Activated CD4-positive, alpha-beta T cell treated with anti-CD3 and anti-CD28 coated beads for 36 hours (primary cell): ENCODE measurements at regions of chr17 and their contacts with region 1.

Region 1: GRCh38 chr17:75784473-75785015 is at the start of gene UNK:
- DNase-seq: peak; percentile 97
- ATAC-seq: peak; percentile 67
- H3K4me3 Mint-ChIP-seq: peak within 1 kb of the TSS; percentile 91
- H3K27ac Mint-ChIP-seq: peak within 1 kb of the TSS; percentile 100
- H3K4me1 Mint-ChIP-seq: peaks cover 55% of the 10 kb centered on the region
- H3K27me3 Mint-ChIP-seq: peaks cover 1% of the 10 kb centered on the region
- total RNA-seq, gene UNK: 24.5 to 33.7 TPM

Region 2: DNA sequence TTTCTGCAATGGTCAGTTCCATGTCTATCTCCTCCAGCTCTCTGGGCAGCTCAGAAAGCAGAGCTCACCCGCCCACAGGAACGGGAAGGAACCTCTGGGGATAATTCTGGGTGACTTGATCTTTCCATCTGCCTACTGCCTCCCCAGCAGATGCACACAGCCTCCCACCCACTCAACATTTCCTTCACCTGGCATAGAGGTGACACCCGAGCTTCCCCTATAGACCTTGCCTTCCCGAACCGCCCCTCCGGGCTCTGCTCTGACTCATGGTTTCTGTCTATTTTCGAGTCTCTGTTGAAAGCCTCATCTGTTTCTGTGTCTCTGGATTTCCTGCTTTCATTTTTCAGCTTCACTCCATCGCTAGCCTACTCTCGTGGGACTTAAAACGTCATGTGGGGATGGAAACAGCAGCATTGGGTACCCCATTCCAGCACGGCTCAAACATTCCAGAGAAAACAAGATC is 534.5 kb before region 1 on chr17:
- CTCF ChIA-PET with region 1: no interaction called
- POLR2A ChIA-PET with region 1: no interaction called
- intact Hi-C with region 1: no loop called
- DNase-seq: peak; percentile 90
- ATAC-seq: peak; percentile 97
- H3K4me3 Mint-ChIP-seq: peak overlapping the region; percentile 64
- H3K27ac Mint-ChIP-seq: peak overlapping the region; percentile 97
- H3K4me1 Mint-ChIP-seq: peaks cover 74% of the 10 kb centered on the region
- H3K27me3 Mint-ChIP-seq: no peaks in the 10 kb centered on the region

Region 3: GRCh38 chr17:75667021-75667790 is 117.3 kb before region 1 on chr17 and contains the starts of genes RECQL5 and SAP30BP:
- CTCF ChIA-PET with region 1: interaction called, 6 read pairs
- POLR2A ChIA-PET with region 1: interaction called, 3 read pairs
- intact Hi-C with region 1: loop called in 1 of 2 experiments (anchors 1 kb)
- DNase-seq: peak; percentile 99
- ATAC-seq: peak; percentile 100
- H3K4me3 Mint-ChIP-seq: no peak within 1 kb of the TSS
- H3K27ac Mint-ChIP-seq: no peak within 1 kb of the TSS
- H3K4me1 Mint-ChIP-seq: peaks cover 34% of the 10 kb centered on the region
- H3K27me3 Mint-ChIP-seq: no peaks in the 10 kb centered on the region
- total RNA-seq, gene RECQL5: 36.4 to 40.5 TPM
- total RNA-seq, gene SAP30BP: 87.8 to 100.0 TPM

Region 4: GRCh38 chr17:75827252-75828115 is 42.9 kb after region 1 on chr17:
- CTCF ChIA-PET with region 1: interaction called, 15 read pairs
- POLR2A ChIA-PET with region 1: interaction called, 5 read pairs
- intact Hi-C with region 1: loop called (anchors 2 to 5 kb)
- DNase-seq: peak; percentile 85
- ATAC-seq: peak; percentile 75
- H3K4me3 Mint-ChIP-seq: peak overlapping the region; percentile 53
- H3K27ac Mint-ChIP-seq: peak overlapping the region; percentile 87
- H3K4me1 Mint-ChIP-seq: peaks cover 14% of the 10 kb centered on the region
- H3K27me3 Mint-ChIP-seq: no peaks in the 10 kb centered on the region

Region 5: GRCh38 chr17:75896415-75897159 is 112.0 kb after region 1 on chr17 and contains the start of gene TRIM65:
- CTCF ChIA-PET with region 1: interaction called, 4 read pairs
- POLR2A ChIA-PET with region 1: no interaction called
- intact Hi-C with region 1: loop called in 1 of 2 experiments (anchors 2 kb)
- DNase-seq: peak; percentile 86
- ATAC-seq: peak; percentile 85
- H3K4me3 Mint-ChIP-seq: peak within 1 kb of the TSS; percentile 84
- H3K27ac Mint-ChIP-seq: peak within 1 kb of the TSS; percentile 72
- H3K4me1 Mint-ChIP-seq: peaks cover 19% of the 10 kb centered on the region
- H3K27me3 Mint-ChIP-seq: no peaks in the 10 kb centered on the region
- total RNA-seq, gene TRIM65: 28.9 to 31.9 TPM

Region 6: DNA sequence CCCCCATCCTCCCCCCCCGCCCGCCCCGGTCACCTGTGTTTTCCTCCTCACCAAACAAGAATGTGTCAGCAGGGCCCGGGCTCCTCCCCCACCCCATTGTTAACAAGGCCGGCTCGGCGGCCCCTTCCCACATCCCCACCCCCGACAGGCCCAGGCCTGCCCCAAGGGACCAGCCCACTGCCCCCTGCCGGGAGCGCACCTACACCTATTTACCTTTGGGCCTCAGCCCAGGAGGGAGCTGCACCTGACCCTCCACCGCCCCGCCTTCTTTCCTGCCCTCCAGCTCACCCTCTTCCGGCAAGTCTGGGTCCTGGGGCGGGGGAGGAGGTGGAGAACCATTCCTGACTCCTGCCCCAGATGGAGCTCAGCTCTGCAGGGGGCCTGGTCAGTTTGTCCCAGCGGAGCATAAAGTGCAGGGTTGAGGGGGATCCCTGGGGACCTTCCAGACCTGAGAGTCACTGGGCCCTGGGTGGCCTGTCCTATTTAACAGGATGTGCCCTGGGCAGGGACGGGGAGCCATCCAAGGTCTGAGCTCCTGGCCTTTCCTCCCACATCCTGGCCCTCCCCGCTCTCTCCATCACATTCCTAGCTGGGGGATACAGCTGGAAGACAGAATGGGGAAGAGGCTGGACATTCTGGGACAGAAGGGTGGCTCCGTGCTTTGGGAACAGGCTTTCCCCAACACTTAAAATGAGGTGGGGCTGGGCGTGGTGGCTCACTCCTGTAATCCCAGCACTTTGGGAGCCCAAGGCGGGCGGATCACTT is 348.2 kb after region 1 on chr17:
- CTCF ChIA-PET with region 1: no interaction called
- POLR2A ChIA-PET with region 1: no interaction called
- intact Hi-C with region 1: no loop called
- DNase-seq: no peak
- ATAC-seq: no peak
- H3K4me3 Mint-ChIP-seq: no peak overlapping the region
- H3K27ac Mint-ChIP-seq: no peak overlapping the region
- H3K4me1 Mint-ChIP-seq: peaks cover 13% of the 10 kb centered on the region
- H3K27me3 Mint-ChIP-seq: no peaks in the 10 kb centered on the region

Region 7: DNA sequence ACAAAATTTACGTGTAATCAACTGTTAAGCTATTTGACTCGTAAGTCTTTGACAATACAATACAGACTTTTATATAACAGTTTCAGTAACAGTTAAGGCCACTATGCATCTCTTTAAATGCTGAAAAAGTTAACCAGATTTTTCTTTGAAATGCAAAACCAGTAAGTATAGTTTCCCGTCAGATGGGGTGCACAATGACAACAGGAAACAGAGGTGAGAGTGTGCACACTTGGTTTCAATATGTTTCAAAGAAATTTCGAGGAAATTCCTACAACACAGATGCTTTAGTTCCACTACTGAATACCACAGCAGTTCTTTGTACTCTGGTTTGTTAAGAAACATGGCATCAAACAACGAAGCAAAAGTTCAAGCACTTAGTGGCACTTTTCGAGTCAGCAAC is 407.4 kb after region 1 on chr17:
- CTCF ChIA-PET with region 1: no interaction called
- POLR2A ChIA-PET with region 1: interaction called, 3 read pairs
- intact Hi-C with region 1: loop called in 1 of 2 experiments (anchors 5 kb)
- DNase-seq: peak; percentile 63
- ATAC-seq: peak; percentile 79
- H3K4me3 Mint-ChIP-seq: peak overlapping the region; percentile 61
- H3K27ac Mint-ChIP-seq: peak overlapping the region; percentile 96
- H3K4me1 Mint-ChIP-seq: peaks cover 80% of the 10 kb centered on the region
- H3K27me3 Mint-ChIP-seq: no peaks in the 10 kb centered on the region